GM13976 (cell line): ENCODE measurements at regions of chr10 and their contacts with region 1.

Region 1: DNA sequence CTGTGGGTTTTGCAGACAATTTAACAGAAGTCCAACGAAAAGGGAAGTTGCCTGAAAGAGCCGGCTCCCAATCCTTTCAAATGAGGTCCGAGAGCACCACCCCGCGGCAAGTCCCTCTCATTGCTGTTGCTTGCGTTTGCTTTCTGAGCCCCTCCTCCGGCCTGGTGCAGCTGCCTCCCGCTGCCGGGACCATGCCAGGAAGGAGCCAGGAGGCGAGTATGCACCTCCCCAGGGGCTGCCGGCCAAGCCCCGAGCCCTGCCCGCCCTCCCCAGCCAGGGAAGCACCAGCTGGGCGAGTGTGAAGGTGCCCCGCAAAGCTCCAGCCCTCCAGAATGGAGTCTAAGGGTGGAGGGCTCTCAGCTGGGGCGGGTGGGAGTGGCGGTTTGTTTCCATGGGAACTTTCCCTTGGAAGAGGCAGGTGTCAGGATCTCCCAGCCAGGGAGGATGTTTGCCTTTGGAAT is 25.8 kb upstream of the PPP2R2D start:
- DNase-seq: peak; percentile 89
- CTCF ChIP-seq: peak; percentile 86

Region 2: DNA sequence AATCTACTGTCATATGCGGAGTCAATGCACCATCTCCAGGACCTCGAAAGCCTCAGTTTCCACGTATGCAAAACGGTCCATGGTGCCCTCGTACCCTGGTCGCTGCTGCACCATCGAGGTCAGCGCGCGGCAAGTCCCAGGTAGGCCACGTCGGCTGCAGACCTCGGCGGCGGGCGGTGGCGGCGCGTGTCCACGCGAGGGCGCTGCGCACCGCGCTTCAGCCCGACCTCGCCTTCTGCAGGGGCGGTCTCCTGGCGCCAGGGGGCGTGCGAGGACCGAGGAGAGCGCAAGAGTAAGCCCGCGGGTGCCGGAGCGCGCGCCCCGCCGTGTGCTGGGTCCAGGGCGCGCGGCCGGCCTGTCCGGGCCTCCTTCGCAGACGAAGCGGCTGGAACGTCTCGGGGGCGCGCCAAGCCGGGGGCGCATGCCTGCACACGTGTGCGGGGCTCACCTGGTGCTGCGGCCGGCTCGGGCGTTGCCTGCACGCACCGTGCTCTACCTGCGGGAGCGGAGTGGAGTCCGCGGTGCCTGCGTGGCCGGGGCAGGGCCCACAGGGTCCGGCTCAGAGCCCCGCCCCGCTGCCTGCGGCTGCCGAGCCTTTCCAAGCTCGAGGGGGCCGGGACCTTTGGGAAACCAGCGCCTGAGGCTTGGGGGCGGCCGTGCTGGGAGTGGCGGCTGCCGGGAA is 1684.8 kb before region 1 on chr10:
- in situ Hi-C with region 1: loop called (anchors 25 kb)
- DNase-seq: peak; percentile 96
- CTCF ChIP-seq: peak; percentile 100

Region 3: DNA sequence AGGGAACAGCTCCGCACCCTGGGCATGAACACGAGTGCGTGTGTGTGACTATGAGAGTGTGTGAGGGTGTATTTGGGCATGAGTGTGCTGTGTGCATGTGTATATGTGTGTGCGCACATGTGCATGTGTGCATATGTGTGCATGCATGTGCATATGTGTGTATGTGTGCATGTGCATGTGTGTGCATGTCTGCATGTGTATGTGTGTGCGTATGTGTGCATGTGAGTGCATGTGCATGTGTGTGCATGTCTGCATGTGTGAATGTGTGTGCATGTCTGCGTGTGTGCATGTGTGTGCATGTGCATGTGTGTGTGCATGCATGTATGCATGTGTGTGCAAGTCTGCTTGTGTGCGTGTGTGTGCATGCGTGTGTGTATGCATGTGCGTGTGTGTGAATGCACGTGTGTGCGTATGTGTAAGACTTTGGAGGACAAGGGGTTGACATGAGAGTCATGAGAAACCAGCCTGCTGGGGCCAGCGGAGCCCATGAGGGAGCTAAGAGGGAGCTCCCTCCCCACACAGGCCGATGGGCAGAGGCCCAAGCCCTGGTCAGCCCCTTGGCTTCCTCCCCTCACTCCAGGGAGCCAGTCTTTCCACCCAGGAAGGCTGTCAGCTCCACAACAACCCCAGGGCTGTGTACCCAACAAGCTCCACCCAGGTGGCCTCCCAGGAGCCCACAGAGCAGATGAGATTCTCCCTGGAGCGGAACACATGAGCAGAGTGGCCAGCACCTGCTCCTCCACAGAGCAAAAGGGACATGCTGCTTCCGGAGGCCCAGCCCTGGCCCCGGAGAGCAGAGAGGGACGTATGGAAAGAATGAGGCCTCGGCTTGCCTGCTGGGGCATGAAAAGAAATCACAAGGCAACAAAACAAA is 116.7 kb before region 1 on chr10:
- in situ Hi-C with region 1: no loop called
- DNase-seq: no peak
- CTCF ChIP-seq: no peak

Region 4: GRCh38 chr10:132065491-132066105 is 190.6 kb after region 1 on chr10 and contains the start of gene JAKMIP3:
- in situ Hi-C with region 1: no loop called
- DNase-seq: no peak
- CTCF ChIP-seq: no peak

Region 5: DNA sequence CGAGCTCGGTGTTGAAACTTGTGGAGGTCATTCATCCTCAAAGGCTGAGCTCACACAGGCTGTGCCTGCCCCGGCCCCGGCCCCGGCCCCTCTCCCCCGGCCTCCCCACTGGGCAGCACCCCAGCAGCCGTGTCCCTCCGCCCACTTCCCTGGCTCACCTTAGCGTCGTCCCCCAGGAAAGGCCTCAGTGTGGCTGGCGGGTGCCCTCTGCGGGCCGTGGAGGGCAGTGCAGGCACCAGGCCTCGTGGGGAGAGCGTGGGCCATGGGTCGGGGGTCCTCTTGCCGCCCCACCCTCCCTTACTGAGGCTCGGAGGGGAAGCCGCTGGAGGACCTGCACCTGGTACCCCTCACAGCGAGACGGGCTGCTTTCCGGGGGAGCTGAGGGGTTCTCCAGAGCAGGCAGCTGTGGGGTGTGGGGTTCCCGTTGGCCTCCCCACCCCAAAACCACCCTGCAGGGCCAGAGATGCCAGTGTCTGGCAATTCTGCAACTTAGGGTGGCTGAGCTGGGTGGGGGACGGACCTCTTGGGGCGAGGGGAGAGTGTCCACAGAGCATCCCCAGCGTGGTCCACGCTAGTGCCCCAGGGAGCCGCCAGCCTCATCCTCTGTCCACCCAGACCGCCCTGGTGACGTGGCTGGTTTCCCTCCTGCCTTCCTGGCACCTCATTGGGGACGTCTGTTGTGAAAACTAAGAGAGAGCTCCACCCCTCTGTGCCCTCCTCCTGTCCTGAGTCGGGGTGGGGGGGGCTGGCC is 267.6 kb after region 1 on chr10:
- in situ Hi-C with region 1: loop called (anchors 25 kb)
- DNase-seq: peak; percentile 90
- CTCF ChIP-seq: peak; percentile 87